ENCODE measurements at regions of chr3 and their contacts with region 1.

Region 1: DNA sequence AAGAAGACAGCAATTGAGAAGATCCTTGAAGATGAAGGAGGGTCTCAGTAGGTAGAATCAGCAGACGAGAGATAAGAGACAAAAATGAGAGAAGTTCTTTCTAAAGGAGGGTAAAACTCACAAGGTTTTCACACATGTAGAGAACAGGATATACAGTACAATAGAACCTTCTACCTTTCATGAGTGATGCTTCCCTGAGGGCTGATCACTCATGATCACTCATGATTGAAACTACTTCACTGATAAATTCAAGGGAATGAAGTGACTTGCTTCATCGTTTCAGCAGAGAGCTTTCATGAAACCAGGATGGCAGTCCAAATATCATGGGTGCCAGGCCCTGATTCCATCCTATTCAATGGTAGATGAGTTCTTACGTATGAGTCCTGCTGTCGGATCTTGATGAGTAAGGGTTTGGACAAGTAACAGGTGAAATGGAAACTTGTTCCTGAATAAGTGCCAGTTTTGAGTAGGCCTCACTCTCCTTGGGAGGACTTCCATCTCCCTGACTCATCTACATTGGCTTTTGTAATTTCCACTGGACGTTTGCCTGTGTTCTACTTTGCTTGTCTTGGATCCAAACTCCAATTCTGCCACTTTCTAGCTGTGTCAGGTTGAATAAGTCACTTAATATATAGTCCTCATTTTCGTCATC is 9.6 kb upstream of the CLDN16 start:
- DNase-seq: peak; percentile 98
- H3K4me3 Mint-ChIP-seq: no peak overlapping the region
- H3K27ac Mint-ChIP-seq: peak overlapping the region; percentile 2
- H3K4me1 Mint-ChIP-seq: peaks cover 55% of the 10 kb centered on the region
- H3K27me3 Mint-ChIP-seq: no peaks in the 10 kb centered on the region
- CTCF ChIP-seq: no peak

Region 2: DNA sequence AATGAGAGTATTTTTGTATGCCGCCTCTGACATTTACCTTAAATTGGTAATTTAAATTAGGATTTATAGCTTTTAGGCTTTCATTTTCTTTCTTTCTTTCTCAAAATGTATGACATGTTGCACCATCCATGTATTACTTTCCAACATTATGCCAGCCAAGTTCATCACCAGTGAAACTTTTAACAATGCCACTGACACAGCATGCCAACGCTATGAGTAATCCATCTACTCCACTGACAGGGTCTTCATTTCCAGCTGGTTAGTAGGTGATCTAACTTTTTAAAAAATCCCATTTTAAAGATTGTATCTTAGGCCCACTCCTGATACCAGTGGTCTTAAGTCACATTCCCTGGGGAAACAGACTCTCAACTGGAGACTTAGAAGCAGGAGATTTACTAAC is 12.2 kb before region 1 on chr3:
- CTCF ChIA-PET with region 1: interaction called, 21 read pairs
- POLR2A ChIA-PET with region 1: interaction called, 59 read pairs
- intact Hi-C with region 1: no loop called
- DNase-seq: peak; percentile 79
- H3K4me3 Mint-ChIP-seq: no peak overlapping the region
- H3K27ac Mint-ChIP-seq: peak overlapping the region; percentile 87
- H3K4me1 Mint-ChIP-seq: peaks cover 37% of the 10 kb centered on the region
- H3K27me3 Mint-ChIP-seq: no peaks in the 10 kb centered on the region
- CTCF ChIP-seq: no peak